CD4-positive, alpha-beta memory T cell (primary cell): ENCODE measurements at regions of chr11 and their contacts with region 1.

Region 1: GRCh38 chr11:117232092-117232878 is at the start of gene RNF214:
- DNase-seq: peak; percentile 65 to 83 (median 75)
- H3K4me3 ChIP-seq: peak within 1 kb of the TSS; percentile 87 to 93
- H3K4me3 Mint-ChIP-seq: peak within 1 kb of the TSS; percentile 97 to 100 (median 99)
- H3K27ac ChIP-seq: peak within 1 kb of the TSS; percentile 90
- H3K27ac Mint-ChIP-seq: peak within 1 kb of the TSS; percentile 95 to 100 (median 99)
- H3K4me1 ChIP-seq: peaks cover 47% of the 10 kb centered on the region
- H3K4me1 Mint-ChIP-seq: peaks cover 27 to 62% (median 49%) of the 10 kb centered on the region in 4 donors
- H3K27me3 ChIP-seq: no peaks in the 10 kb centered on the region
- H3K27me3 Mint-ChIP-seq: no peaks in the 10 kb centered on the region
- total RNA-seq, gene RNF214: 41.8 to 50.1 TPM

Region 2: DNA sequence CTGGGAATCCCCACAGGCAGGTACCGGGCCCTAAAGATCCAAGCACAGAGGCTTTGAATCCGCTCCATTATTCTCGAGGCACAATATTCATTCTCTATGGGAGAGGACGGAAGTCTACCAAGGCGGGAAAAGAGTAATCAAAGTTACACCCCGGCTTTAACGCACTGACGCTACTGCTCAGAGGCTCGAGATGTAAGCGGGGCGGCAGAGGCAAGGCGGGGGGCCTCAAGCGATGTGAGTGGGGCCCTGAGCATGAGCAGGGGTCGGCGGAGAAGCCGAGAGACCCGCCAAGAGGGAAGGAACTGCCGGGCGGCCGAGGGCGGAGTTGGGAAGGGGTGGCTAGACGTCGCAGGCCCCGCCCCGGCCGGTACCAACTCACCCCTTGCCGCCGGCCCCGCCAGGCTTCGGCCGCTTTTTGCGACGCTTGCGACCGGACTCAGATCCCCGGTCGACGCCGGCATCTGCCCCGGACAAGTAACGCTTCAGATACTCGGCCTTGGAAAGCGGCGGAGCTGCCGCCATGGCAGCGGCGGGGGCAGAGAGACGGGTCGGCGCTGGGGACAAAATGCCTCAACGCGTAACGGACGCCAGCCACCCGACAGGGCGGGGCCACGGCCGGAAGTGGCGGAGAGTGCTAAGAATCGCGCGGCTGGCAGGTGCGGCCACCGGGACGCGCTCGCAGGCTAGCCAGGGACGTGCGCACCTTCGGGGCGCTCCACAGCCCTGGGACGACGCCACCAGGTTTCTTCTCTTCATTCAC is 459.7 kb before region 1 on chr11 and contains the start of gene BUD13:
- CTCF ChIA-PET with region 1: no interaction called
- POLR2A ChIA-PET with region 1: interaction called, 5 read pairs
- intact Hi-C with region 1: loop called (anchors 2 kb)
- DNase-seq: peak; percentile 92 to 96 (median 93)
- H3K4me3 ChIP-seq: peak within 1 kb of the TSS; percentile 71 to 93
- H3K4me3 Mint-ChIP-seq: peak within 1 kb of the TSS; percentile 97 to 100 (median 98)
- H3K27ac ChIP-seq: peak within 1 kb of the TSS; percentile 94
- H3K27ac Mint-ChIP-seq: peak within 1 kb of the TSS; percentile 94 to 99 (median 98)
- H3K4me1 ChIP-seq: peaks cover 24% of the 10 kb centered on the region
- H3K4me1 Mint-ChIP-seq: peaks cover 24 to 47% (median 35%) of the 10 kb centered on the region in 4 donors
- H3K27me3 ChIP-seq: no peaks in the 10 kb centered on the region
- H3K27me3 Mint-ChIP-seq: no peaks in the 10 kb centered on the region
- total RNA-seq, gene BUD13: 19.9 to 23.1 TPM